Activated naive CD4-positive, alpha-beta T cell treated with anti-CD3 and anti-CD28 coated beads, Interleukin-2, amount 10 ng/mL, durations not matched to agents 7 days and 5 days (primary cell): ENCODE measurements at regions of chr7 and their contacts with region 1.

Region 1: DNA sequence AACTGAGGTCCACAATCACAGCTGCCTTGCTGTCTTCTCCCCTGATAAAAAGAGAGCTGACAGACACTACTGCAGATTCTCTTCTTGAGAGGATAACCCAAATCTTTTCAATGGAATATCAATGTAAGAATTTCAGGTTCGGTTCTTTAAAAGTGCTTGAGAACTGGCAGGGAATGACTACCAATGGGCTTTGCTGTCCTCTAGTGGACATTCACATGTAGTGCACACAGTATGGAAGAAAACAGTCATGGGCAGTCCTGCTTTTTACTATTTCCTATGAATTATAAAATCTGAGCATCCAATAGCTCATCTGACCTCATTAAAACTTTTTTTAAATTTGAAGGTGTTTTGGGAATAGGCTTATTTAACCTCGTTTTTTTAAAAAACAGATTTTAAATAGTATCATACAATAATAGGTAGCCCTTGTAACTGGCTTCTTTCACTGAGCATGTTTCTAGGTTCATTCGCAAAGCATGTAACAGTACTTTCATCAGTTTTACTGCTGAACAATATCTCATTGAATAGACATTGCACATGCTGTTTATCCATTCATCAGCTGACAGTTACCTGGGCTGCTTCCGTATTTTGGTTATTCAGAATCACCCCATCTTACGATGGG is 18.3 kb downstream of the FZD9 start:
- DNase-seq: peak; percentile 37
- H3K4me3 Mint-ChIP-seq: no peak overlapping the region
- H3K27ac Mint-ChIP-seq: no peak overlapping the region
- H3K4me1 Mint-ChIP-seq: peaks cover 4% of the 10 kb centered on the region
- H3K27me3 Mint-ChIP-seq: no peaks in the 10 kb centered on the region

Region 2: GRCh38 chr7:73328696-73329095 is 123.2 kb before region 1 on chr7:
- CTCF ChIA-PET with region 1: interaction called, 12 read pairs
- DNase-seq: no peak
- H3K4me3 Mint-ChIP-seq: no peak overlapping the region
- H3K27ac Mint-ChIP-seq: no peak overlapping the region
- H3K4me1 Mint-ChIP-seq: peaks cover 13% of the 10 kb centered on the region
- H3K27me3 Mint-ChIP-seq: peaks cover 9% of the 10 kb centered on the region

Region 3: GRCh38 chr7:73487486-73487885 is 35.6 kb after region 1 on chr7:
- CTCF ChIA-PET with region 1: no interaction called
- DNase-seq: no peak
- H3K4me3 Mint-ChIP-seq: no peak overlapping the region
- H3K27ac Mint-ChIP-seq: no peak overlapping the region
- H3K4me1 Mint-ChIP-seq: no peaks in the 10 kb centered on the region
- H3K27me3 Mint-ChIP-seq: no peaks in the 10 kb centered on the region

Region 4: GRCh38 chr7:73526896-73527821 is 75.3 kb after region 1 on chr7:
- CTCF ChIA-PET with region 1: no interaction called
- DNase-seq: peak; percentile 43
- H3K4me3 Mint-ChIP-seq: peak overlapping the region; percentile 19
- H3K27ac Mint-ChIP-seq: peak overlapping the region; percentile 93
- H3K4me1 Mint-ChIP-seq: peaks cover 54% of the 10 kb centered on the region
- H3K27me3 Mint-ChIP-seq: no peaks in the 10 kb centered on the region